ENCODE measurements at regions of chr6 and their contacts with region 1.

Region 1: DNA sequence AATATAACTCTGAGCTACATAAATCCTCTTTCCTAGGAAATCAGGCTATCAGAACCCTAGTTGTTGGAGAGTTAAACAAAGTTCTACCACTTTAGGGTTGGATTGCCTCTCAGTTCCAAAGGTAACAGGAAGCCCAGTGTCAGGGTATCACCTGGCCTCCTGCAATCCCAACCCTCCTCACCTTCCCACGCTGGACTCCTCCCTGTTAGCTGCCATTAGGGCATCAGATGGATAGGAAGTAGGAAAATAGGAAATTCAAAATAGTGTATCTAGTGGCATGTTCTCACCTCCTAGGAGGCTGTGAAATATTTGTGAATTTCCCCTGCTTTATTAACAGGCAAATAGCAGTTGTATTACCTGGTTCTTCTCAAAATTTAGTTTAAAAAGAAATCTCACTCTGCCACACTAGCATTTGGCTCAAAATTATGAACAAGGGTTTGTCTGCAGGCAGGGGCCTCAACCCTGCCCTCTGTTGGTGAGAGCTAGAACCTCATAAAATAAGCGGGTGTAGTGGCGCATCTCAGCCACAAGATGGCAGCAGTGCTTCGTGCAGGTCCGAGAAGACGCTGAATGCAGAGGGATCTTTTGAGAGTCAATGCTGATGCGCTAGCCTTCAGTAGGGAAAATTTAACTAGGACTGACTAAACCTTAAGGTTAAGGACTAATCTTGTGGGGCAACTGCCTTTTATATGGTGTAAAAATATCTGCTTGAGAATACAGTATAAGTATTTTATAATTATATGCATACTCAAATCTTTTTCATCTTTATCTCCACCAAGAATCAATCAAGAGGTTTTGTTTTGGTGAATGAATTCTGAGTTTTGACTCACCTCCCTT is 209.8 kb upstream of the KCNQ5 start:
- DNase-seq: peak; percentile 28 to 87 (median 65)
- ATAC-seq: peak; percentile 75 to 88 (median 78)
- H3K4me3 ChIP-seq: no peak overlapping the region
- H3K4me3 Mint-ChIP-seq: no peak overlapping the region
- H3K27ac ChIP-seq: no peak overlapping the region
- H3K27ac Mint-ChIP-seq: no peak overlapping the region
- H3K4me1 ChIP-seq: no peaks in the 10 kb centered on the region
- H3K4me1 Mint-ChIP-seq: no peaks in the 10 kb centered on the region
- H3K27me3 ChIP-seq: peaks cover 0 to 8% of the 10 kb centered on the region in 2 experiments
- H3K27me3 Mint-ChIP-seq: peaks cover 7 to 15% of the 10 kb centered on the region in 2 donors

Region 2: DNA sequence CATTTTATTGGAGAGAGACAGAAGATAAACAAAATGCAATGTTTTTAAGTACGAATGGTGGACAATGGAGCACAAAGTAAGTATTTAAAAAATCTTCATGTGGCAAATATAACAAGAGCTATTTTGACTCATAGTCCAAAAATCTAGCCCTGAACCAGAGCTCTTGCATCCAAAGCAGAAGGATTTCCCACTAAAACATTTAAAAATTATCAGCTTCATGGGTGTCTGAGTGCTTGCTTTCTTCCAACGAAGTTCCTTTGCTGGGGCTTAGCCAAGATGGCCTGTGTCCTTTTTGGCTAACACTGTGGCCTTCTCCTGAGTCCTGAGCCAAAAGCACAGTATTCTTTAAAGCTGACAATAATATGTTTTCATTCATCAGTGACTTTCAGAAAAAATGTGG is 364.0 kb before region 1 on chr6:
- CTCF ChIA-PET with region 1: no interaction called
- POLR2A ChIA-PET with region 1: no interaction called
- DNase-seq: no peak
- ATAC-seq: no peak
- H3K4me3 ChIP-seq: no peak overlapping the region
- H3K4me3 Mint-ChIP-seq: no peak overlapping the region
- H3K27ac ChIP-seq: no peak overlapping the region
- H3K27ac Mint-ChIP-seq: no peak overlapping the region
- H3K4me1 ChIP-seq: no peaks in the 10 kb centered on the region
- H3K4me1 Mint-ChIP-seq: no peaks in the 10 kb centered on the region
- H3K27me3 ChIP-seq: no peaks in the 10 kb centered on the region
- H3K27me3 Mint-ChIP-seq: no peaks in the 10 kb centered on the region

Region 3: GRCh38 chr6:72422171-72422570 is 10.1 kb after region 1 on chr6:
- CTCF ChIA-PET with region 1: interaction called, 6 to 12 read pairs
- POLR2A ChIA-PET with region 1: no interaction called
- DNase-seq: no peak
- ATAC-seq: no peak
- H3K4me3 ChIP-seq: no peak overlapping the region
- H3K4me3 Mint-ChIP-seq: no peak overlapping the region
- H3K27ac ChIP-seq: no peak overlapping the region
- H3K27ac Mint-ChIP-seq: no peak overlapping the region
- H3K4me1 ChIP-seq: no peaks in the 10 kb centered on the region
- H3K4me1 Mint-ChIP-seq: peaks cover 0 to 1% (median 0%) of the 10 kb centered on the region in 3 donors
- H3K27me3 ChIP-seq: peaks cover 0 to 5% of the 10 kb centered on the region in 2 experiments
- H3K27me3 Mint-ChIP-seq: peaks cover 5 to 13% of the 10 kb centered on the region in 2 donors

Region 4: GRCh38 chr6:72616406-72617015 is 204.4 kb after region 1 on chr6:
- CTCF ChIA-PET with region 1: interaction called in 1 of 2 experiments, 14 read pairs
- POLR2A ChIA-PET with region 1: no interaction called
- DNase-seq: peak in 1 of 35 experiments; percentile 65
- ATAC-seq: no peak
- H3K4me3 ChIP-seq: no peak overlapping the region
- H3K4me3 Mint-ChIP-seq: no peak overlapping the region
- H3K27ac ChIP-seq: no peak overlapping the region
- H3K27ac Mint-ChIP-seq: peak overlapping the region in 1 of 2 donors; percentile 73
- H3K4me1 ChIP-seq: peaks cover 24 to 37% of the 10 kb centered on the region in 2 experiments
- H3K4me1 Mint-ChIP-seq: peaks cover 39 to 55% (median 46%) of the 10 kb centered on the region in 3 donors
- H3K27me3 ChIP-seq: peaks cover 0 to 10% of the 10 kb centered on the region in 2 experiments
- H3K27me3 Mint-ChIP-seq: no peaks in the 10 kb centered on the region

Region 5: DNA sequence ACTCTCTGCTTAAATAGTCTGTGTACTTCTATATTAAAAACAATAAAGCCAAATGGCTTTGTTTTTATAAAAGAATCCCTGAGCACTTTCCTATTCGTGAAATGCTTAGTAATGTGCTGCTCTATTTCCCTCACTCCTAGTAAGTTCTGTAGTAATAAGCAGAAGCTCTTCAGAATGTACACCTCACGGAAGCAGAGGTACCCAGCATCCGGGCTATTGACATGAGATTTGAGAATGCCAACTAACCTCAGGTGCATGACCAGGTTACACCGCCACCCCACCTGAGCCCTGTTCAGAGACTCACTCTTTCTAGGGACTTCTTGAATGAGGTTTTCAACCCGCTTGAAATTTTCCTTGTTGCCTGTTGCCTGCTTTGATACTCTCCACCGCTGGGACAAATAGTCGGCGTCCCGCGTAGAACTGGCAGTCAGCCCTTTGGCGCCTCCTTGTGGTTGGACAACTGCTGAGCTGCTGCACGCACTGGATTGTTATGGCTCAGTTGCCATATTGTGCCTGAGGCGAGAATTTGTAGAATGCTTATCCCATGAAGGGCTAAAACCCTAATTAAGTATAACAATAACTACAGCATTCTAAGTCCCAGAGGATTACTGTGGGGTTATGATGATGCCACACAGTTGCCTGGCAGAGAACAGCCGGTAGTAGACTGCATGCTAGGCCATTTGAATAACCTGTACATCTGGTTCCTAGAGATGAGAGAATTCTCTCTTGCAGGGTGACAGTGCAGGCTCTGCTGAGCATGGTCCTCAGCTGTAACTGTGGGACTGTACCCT is 717.8 kb after region 1 on chr6:
- CTCF ChIA-PET with region 1: interaction called, 52 to 72 read pairs
- POLR2A ChIA-PET with region 1: no interaction called
- DNase-seq: peak; percentile 43 to 85 (median 72)
- ATAC-seq: peak; percentile 79 to 88 (median 86)
- H3K4me3 ChIP-seq: no peak overlapping the region
- H3K4me3 Mint-ChIP-seq: peak overlapping the region; percentile 24 to 43 (median 41)
- H3K27ac ChIP-seq: no peak overlapping the region
- H3K27ac Mint-ChIP-seq: no peak overlapping the region
- H3K4me1 ChIP-seq: peaks cover 0 to 6% of the 10 kb centered on the region in 2 experiments
- H3K4me1 Mint-ChIP-seq: peaks cover 4 to 6% (median 5%) of the 10 kb centered on the region in 3 donors
- H3K27me3 ChIP-seq: no peaks in the 10 kb centered on the region
- H3K27me3 Mint-ChIP-seq: no peaks in the 10 kb centered on the region